Posterior cingulate gyrus (tissue), 11 donors: ENCODE measurements at regions of chr19 and their contacts with region 1.

Region 1: DNA sequence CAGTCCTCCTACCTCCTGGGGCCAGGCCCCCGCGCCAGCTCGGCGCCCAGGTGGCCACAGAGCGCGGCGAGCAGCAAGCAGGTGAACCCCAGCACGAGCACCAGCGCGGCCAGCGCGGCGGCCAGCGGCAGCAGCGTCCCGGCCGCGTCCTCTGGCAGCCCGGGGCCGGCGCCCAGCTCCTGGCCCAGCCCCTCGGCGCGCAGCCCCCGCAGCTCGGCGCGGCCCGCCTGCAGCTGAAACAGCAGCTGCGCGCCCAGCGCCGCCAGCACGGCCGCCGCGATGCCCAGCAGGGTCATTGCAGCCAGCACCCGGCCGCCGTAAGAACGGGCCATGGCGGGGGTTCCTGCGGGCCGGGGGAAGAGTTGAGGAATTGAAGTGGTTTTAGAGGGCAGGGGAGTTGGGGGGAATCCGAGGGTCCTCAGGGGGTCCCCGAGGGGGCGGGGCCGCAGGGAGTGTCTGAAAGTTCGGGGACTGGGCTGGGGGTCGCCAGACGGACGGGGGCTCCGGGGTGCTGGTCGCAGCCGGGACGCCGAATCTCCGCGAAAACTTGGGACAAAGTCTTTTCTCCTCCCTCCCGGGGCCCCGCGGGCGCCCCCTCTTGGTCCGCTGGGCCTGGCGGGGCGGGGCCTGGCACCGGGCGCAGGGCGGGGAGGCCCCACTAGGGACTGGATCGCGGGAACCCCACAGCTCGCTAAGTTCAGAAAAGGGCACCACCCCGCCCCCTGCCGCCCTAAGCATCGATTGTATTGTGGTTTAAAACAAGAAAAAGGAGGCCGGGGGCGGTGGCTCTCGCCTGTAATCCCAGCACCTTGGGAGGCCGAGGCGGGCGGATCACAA is at the start of gene TMEM221:
- DNase-seq: peak in 5 of 10 donors; percentile 18 to 85 (median 40)

Region 2: DNA sequence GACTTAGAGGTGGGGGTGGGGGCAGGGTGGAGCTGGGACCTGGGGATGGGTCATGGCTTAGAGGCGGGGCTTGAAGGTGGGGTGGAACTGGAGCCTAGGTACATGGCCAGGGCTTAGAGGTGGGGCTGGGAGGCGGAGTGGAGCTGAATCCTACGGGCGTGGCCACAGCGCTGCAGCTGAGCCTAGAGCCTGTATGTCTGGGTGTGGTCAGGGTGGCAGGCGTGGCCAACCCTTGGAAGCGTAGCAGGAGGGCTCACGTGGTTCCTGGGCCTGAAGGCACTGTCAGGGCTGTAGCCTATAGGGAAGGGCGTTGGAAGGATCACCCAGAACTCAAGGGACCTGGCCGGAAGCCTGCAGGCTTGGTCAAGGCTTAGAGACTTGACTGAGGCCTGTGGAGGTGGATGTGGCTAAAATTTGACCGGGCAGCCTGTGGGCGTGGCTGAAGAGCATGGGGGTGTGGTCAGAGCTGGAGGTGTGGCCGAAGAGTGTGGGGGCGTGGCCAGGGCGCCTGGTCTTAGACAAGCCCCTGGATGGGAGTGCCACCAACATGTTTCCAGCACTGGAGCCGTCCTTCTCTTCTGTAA is 131.4 kb after region 1 on chr19:
- intact Hi-C with region 1: loop called (anchors 1 kb)
- DNase-seq: peak in 1 of 10 donors; percentile 57